ENCODE measurements at regions of chr14 and their contacts with region 1.

Region 1: DNA sequence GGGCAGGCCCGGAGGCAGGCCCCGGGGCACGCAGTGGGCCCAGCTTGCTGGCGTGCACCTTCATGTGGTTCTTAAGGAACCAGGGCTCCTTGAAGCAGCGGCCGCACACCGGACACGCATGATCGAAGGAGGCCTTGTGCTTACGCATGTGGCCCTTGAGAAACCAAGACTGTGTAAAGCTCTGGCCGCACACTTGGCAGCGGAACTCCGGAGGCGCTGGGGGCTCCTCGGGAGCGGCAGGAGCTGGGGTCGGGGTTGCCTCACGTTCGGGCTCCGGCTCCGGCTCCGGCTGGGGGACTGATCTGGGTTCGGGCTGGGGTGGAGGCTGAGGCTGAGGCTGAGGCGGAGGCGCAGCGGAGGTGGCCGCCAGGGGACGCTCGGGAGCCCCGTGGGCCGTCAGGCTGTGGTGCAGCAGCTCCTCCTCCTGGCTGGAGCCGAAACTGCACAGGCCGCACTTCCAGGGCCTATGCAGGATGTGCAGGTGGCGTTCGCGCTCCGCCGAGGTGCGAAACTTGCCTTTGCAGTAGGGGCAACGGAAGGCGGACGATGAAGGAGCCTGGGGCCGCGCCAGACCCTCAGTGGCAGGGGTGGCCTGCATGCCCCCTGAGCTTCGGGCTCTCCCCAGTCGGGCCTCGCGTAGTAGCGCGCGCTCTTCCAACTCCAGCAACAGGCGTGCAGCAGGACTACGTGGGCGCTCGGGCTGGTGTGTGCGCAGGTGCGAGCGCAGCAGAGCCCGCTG is 6.0 kb downstream of the ZNF219 start:
- DNase-seq: peak; percentile 92
- ATAC-seq: peak; percentile 82

Region 2: DNA sequence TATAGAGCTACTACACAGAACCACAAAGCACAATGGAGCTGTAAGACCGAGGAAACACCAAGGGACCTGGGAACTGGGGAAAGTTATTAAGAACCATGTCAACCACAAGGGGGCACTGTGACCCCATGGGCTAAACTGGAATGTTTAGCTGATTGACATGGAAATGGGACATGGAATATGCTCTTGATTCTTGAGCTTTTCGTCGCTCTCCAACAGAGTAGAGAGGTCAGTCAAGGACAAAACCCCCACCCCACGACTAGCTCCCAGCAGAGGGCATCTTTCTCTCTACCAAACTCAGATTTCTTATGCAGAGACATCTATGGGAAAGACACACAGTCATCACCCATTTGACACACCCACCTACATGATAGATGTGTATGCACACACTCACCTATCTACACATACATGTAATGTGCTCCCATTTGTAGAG is 77.7 kb before region 1 on chr14:
- intact Hi-C with region 1: loop called (anchors 5 kb)
- DNase-seq: peak; percentile 94
- ATAC-seq: peak; percentile 89

Region 3: DNA sequence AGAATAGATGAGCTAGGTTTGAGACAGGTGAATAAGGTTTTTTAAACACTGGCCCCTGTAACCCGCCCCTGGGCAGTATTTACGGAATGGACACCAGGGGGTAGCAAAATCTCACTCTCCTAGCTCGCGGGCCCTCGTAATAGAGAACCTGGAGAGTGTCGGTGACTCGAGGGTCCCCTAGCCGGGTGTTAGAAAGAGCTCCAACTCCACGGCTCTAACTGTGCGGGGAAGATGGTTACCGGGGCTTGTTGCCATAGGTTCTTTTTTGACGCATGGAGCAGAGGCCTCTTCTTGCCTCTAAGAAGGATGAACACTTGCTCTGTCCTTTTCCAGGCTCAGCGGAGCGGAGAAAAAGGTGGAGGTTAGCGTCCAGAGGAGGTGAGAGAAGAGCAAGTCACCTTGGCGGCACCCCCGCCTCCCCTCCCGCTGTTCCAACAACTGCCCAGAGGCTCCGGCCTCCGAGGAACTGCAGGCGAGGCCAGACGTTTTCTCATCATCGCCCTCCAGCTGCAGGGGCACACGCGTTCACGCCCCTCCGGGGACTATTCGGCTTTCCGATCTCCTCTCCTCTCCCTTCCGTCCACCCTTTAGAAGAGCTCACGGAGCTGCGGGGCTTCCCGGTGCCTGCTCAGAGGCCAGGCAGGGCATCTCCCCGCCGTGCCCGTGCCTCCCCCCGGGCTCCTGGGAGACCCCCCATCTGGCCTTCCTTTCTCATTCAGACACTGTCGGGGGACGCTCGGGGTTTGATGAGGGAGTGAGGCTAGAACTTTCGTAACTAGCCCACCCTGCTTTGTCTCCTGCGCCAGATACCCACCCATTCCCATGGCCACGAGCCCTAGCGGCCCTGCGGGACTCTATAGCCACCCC is 23.7 kb before region 1 on chr14:
- intact Hi-C with region 1: loop called (anchors 2 kb)
- DNase-seq: no peak
- ATAC-seq: peak; percentile 64

Region 4: DNA sequence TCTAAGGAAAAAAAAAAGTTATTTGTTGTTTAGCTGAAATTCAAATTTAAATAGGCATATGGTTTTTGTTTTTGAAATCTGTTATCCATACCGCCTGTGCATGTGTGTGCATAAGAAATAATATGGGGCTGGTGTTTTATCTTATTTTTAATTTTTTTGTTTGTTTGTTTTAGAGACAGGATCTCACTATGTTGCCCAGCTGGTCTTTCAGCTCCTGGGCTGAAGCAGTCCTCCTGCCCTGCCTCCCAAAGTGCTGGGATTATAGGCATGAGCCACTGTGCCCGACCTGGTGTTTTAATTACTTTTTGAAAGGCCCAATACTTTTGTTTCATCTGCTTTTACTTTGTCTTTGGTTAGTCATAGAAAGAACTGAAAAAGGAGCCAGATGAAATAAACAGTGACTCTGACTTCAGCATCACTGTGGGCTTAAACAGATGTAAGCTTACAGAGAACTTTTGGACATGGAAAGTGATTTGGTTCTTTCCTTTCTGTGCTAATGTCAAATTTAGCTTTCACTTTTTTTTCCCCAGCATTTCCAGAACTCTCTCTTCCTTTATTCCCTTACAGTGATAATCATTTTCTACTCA is 254.2 kb after region 1 on chr14:
- intact Hi-C with region 1: no loop called
- DNase-seq: no peak
- ATAC-seq: no peak